ENCODE measurements at regions of chr12 and their contacts with region 1.

Region 1: DNA sequence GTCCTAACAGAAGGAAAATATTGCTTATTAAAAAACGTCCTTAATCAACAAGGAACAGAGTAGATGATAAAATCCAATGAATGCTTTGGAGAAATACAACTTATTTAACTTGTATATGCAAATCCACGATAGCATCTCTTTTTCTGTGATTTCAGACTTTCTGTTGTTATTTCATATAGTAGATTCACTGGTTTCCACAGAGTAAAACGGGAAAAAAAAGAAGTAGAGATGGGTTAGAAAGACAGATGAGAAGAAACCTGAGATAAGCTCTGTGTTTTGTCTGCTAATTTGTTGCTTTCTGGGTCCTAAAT is 447.7 kb downstream of the RERGL start:
- DNase-seq: no peak
- H3K4me3 ChIP-seq: no peak overlapping the region
- H3K27ac ChIP-seq: no peak overlapping the region
- H3K4me1 ChIP-seq: no peaks in the 10 kb centered on the region
- H3K27me3 ChIP-seq: no peaks in the 10 kb centered on the region
- CTCF ChIP-seq: peak; percentile 16; the same call in 1 of the 2 replicates

Region 2: GRCh38 chr12:16076553-16076952 is 1565.7 kb before region 1 on chr12:
- CTCF ChIA-PET with region 1: no interaction called
- POLR2A ChIA-PET with region 1: no interaction called
- intact Hi-C with region 1: loop called (anchors 10 kb)
- DNase-seq: peak; percentile 5 to 44
- H3K4me3 ChIP-seq: no peak overlapping the region
- H3K27ac ChIP-seq: no peak overlapping the region
- H3K4me1 ChIP-seq: no peaks in the 10 kb centered on the region
- H3K27me3 ChIP-seq: no peaks in the 10 kb centered on the region
- CTCF ChIP-seq: peak; percentile 49; the same call in 1 of the 2 replicates

Region 3: DNA sequence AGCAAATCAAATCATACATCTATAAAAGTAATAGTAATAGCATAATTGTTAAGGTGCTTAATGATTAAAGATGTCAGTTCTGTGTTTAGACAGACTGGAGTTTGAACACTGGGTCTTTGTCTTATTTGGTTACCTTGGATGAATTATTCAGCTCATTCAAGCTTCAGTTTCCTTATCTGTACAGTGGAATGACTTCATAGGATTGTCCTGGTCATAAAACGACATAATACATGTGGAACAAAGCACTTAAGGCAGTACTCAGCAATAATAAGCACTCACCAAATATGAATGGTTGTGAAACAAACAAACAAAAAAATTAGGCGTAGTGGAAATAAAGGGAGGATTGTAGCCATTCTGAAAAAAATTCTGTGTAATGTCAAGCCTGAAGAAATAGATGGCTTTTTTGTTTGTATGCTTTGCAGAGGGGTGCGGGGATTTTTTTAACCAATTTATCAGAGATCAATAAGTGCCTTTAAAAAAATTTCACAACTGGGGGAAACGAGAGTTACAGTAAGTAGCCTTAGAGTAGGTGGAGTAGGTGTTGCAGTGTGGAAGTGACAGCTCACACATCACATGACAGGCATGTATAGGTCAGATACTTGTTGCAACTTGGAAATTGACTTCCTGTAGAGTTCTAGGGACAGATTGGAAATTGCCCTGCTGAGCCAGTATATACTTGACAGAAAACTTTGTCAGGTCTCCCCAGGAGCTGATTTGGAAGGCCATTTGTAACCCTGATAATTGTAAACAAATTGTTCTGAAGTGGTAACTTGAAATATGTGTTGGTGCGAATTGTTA is 1522.5 kb before region 1 on chr12:
- CTCF ChIA-PET with region 1: interaction called, 10 read pairs
- POLR2A ChIA-PET with region 1: no interaction called
- intact Hi-C with region 1: no loop called
- DNase-seq: no peak
- H3K4me3 ChIP-seq: no peak overlapping the region
- H3K27ac ChIP-seq: no peak overlapping the region
- H3K4me1 ChIP-seq: no peaks in the 10 kb centered on the region
- H3K27me3 ChIP-seq: no peaks in the 10 kb centered on the region
- CTCF ChIP-seq: no peak

Region 4: DNA sequence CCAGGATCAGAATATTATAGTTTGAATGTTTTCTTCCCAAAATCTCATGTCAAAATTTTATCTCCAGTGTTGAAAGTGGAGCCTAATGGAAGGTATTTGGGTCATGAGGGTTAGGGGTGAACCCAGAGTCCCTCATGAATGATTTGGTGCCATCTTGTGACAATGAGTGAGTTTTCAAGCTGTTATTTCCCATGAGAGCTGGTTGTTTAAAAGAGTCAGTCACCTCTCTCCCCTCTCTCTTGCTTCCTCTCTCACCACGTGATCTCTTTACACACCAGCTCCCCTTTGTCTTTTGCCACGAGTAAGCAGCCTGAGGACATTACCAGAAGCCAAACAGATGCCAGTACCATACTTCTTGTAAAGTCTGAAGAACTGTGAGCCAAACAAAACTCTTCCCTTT is 113.9 kb before region 1 on chr12:
- CTCF ChIA-PET with region 1: no interaction called
- POLR2A ChIA-PET with region 1: no interaction called
- intact Hi-C with region 1: no loop called
- DNase-seq: no peak
- H3K4me3 ChIP-seq: no peak overlapping the region
- H3K27ac ChIP-seq: no peak overlapping the region
- H3K4me1 ChIP-seq: no peaks in the 10 kb centered on the region
- H3K27me3 ChIP-seq: no peaks in the 10 kb centered on the region
- CTCF ChIP-seq: no peak

Region 5: DNA sequence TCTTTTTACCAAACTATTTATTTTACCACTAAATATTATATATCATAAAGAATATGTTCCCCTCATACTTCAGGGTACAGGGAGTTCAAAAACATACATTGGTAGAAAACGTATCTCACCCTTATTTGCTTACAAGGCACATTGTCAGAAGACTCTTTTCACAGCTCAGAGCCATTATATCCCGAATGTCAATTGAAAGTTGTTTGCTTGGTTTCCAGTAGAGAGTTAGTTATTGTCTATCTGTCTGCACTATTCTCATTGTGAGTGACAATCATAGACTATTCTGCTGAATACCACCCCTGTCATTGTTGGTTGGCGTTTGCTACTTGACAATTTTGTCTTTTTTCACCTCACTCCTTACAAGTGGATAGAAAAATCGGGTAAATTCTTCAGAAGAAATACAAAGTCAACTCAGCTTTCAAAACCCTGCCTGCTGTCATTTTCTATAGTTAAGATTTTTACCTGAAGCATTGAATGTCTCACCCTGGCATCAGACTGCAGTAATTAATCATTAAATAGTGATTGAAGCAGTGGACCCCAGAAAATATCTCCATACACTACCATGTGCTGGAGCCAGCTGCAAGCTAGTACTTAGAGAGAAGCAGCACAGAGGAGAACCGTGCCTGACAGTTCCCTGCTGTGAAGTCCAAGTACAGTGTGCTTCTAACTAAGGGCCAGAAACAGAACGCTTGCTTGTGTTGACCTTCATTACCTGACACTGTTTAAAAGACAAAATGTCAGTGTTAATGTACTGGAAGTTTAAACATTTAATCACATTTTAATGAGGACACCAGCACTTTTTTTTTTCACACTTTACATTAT is 62.9 kb before region 1 on chr12:
- CTCF ChIA-PET with region 1: no interaction called
- POLR2A ChIA-PET with region 1: no interaction called
- intact Hi-C with region 1: no loop called
- DNase-seq: no peak
- H3K4me3 ChIP-seq: no peak overlapping the region
- H3K27ac ChIP-seq: no peak overlapping the region
- H3K4me1 ChIP-seq: no peaks in the 10 kb centered on the region
- H3K27me3 ChIP-seq: no peaks in the 10 kb centered on the region
- CTCF ChIP-seq: no peak

Region 6: DNA sequence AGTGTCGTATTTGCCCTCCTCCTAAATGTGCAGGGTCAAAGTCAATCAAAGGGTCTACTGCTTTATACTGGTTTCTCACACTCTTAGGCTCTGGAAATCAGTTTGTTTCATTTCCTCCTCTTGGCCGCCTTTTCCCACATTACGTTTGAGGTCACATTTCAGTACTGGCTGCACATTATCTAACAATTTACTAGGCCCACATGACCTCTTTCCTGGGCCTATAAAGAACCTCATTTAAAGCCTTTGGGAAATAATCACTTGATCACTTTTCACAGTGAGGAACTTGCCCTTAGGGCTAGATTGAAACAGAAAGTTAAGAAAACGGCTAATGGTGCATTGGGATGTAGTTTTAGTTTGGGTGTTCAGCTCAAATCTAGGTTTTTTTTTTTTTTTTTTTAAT is 49.8 kb before region 1 on chr12:
- CTCF ChIA-PET with region 1: no interaction called
- POLR2A ChIA-PET with region 1: no interaction called
- intact Hi-C with region 1: no loop called
- DNase-seq: no peak
- H3K4me3 ChIP-seq: no peak overlapping the region
- H3K27ac ChIP-seq: no peak overlapping the region
- H3K4me1 ChIP-seq: no peaks in the 10 kb centered on the region
- H3K27me3 ChIP-seq: no peaks in the 10 kb centered on the region
- CTCF ChIP-seq: no peak

Region 7: GRCh38 chr12:17928708-17929366 is 286.5 kb after region 1 on chr12:
- CTCF ChIA-PET with region 1: no interaction called
- POLR2A ChIA-PET with region 1: no interaction called
- intact Hi-C with region 1: loop called (anchors 5 kb)
- DNase-seq: peak; percentile 13 to 79
- H3K4me3 ChIP-seq: no peak overlapping the region
- H3K27ac ChIP-seq: no peak overlapping the region
- H3K4me1 ChIP-seq: peaks cover 3% of the 10 kb centered on the region
- H3K27me3 ChIP-seq: no peaks in the 10 kb centered on the region
- CTCF ChIP-seq: peak; percentile 61; the same call in 1 of the 2 replicates

Measured in PC-9 (cell line).